Common myeloid progenitor, CD34-positive (primary cell): ENCODE measurements at regions of chr9 and their contacts with region 1.

Region 1: DNA sequence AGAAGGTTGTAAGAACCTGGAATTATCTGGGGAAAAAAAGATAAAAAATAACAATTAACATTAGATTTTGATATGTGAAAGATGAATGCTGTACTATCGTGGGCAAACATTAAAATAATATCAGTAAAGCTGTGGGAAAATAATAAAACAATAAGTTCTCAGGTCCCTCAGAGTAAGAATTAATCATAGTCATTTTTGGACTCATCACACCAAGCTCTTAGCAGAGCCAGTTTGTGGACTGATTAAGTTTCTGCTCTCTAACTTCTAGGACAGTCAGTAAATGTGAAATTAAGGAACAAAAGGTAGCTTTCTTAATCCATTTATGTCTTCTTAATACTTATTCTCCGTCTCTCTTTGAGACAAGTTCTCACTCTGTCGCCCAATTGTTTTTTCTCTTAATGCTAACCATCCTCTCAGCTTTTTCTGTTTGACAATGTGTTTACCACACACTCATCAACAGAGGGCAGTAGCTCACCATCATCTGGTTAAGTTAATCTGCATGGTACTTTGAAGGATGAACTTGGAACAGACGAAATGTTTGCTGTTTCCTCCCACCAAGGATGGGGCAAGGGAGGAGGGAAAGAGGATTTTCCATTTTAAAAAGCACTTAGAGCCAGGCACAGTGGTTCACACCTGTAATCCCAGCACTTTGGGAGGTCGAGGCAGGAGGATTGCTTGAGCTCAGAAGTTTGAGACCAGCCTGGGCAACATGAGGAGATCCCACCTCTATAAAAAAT is 5.3 kb upstream of the ACO1 start:
- DNase-seq: peak; percentile 77 to 89 (median 85)
- H3K4me3 ChIP-seq: no peak overlapping the region
- H3K27ac ChIP-seq: no peak overlapping the region
- H3K4me1 ChIP-seq: peaks cover 3 to 13% (median 8%) of the 10 kb centered on the region in 4 experiments
- H3K27me3 ChIP-seq: peaks cover 8 to 14% (median 9%) of the 10 kb centered on the region in 5 experiments

Region 2: DNA sequence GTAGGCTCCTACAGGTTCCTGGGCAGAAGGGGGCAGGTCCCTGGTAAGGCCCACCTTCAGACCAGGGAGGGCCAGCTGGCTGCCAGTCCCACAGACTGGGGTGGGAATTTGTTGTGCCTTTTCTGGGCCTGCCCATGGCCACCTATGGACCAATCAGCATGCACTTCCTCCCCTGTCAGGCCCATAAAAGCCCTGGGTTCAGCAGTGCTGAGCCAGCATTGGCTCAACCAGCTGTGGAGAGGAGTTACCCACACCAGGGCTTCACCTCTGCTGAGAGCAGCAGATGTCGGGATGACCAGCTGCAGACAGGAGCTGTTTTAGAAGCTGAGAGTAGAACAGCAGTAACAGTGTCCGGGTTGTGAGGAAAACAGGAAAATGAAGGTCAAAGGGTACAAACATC is 368.1 kb before region 1 on chr9:
- CTCF ChIA-PET with region 1: no interaction called
- POLR2A ChIA-PET with region 1: no interaction called
- DNase-seq: no peak
- H3K4me3 ChIP-seq: no peak overlapping the region
- H3K27ac ChIP-seq: no peak overlapping the region
- H3K4me1 ChIP-seq: no peaks in the 10 kb centered on the region
- H3K27me3 ChIP-seq: no peaks in the 10 kb centered on the region

Region 3: DNA sequence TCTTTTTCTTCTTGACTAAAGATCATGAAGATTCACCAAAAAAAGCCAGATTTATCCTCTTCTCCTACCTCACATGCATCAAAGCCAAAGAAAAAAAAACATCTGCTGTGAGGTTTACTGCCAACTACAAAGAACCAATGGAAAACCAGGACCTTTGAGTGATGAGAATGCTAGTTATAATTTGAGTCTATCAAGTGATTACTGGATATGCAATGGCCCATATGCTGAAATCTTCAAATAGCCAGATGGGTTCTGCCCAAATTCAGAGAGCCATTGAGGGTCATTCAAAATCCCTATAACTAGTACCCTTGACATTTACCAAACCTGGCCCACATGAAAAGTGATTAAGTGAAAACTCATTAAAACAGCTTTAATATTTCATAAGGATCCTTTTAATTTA is 73.2 kb before region 1 on chr9:
- CTCF ChIA-PET with region 1: no interaction called
- POLR2A ChIA-PET with region 1: no interaction called
- DNase-seq: no peak
- H3K4me3 ChIP-seq: no peak overlapping the region
- H3K27ac ChIP-seq: no peak overlapping the region
- H3K4me1 ChIP-seq: no peaks in the 10 kb centered on the region
- H3K27me3 ChIP-seq: peaks cover 0 to 2% (median 0%) of the 10 kb centered on the region in 5 experiments

Region 4: GRCh38 chr9:32360983-32361673 is 18.0 kb before region 1 on chr9:
- CTCF ChIA-PET with region 1: no interaction called
- POLR2A ChIA-PET with region 1: no interaction called
- DNase-seq: no peak
- H3K4me3 ChIP-seq: no peak overlapping the region
- H3K27ac ChIP-seq: no peak overlapping the region
- H3K4me1 ChIP-seq: no peaks in the 10 kb centered on the region
- H3K27me3 ChIP-seq: peaks cover 0 to 5% (median 2%) of the 10 kb centered on the region in 5 experiments

Region 5: DNA sequence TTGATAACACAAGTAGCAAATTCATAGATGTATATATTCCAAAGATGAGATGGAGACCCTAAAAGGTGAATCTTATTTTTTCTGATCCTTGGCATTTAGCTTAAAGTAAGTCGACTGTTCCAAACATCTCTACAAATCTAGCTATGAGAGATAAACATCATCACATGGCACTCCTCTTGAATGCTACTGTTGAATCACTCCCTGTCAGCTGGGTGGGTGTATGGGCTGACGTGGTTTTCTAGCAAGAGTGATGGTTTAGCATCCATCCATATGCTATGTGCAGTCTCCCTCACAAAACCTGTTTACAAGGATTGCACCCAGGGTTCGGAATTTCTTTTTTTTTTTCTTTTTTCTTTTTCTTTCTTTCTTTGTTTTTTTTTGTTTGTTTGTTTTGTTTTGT is 19.0 kb after region 1 on chr9:
- CTCF ChIA-PET with region 1: interaction called, 10 read pairs
- POLR2A ChIA-PET with region 1: no interaction called
- DNase-seq: no peak
- H3K4me3 ChIP-seq: no peak overlapping the region
- H3K27ac ChIP-seq: no peak overlapping the region
- H3K4me1 ChIP-seq: no peaks in the 10 kb centered on the region
- H3K27me3 ChIP-seq: no peaks in the 10 kb centered on the region

Region 6: GRCh38 chr9:32431940-32432555 is 52.9 kb after region 1 on chr9:
- CTCF ChIA-PET with region 1: interaction called, 153 read pairs
- POLR2A ChIA-PET with region 1: no interaction called
- DNase-seq: peak; percentile 47 to 68 (median 59)
- H3K4me3 ChIP-seq: no peak overlapping the region
- H3K27ac ChIP-seq: no peak overlapping the region
- H3K4me1 ChIP-seq: peaks cover 0 to 2% (median 0%) of the 10 kb centered on the region in 4 experiments
- H3K27me3 ChIP-seq: no peaks in the 10 kb centered on the region

Region 7: DNA sequence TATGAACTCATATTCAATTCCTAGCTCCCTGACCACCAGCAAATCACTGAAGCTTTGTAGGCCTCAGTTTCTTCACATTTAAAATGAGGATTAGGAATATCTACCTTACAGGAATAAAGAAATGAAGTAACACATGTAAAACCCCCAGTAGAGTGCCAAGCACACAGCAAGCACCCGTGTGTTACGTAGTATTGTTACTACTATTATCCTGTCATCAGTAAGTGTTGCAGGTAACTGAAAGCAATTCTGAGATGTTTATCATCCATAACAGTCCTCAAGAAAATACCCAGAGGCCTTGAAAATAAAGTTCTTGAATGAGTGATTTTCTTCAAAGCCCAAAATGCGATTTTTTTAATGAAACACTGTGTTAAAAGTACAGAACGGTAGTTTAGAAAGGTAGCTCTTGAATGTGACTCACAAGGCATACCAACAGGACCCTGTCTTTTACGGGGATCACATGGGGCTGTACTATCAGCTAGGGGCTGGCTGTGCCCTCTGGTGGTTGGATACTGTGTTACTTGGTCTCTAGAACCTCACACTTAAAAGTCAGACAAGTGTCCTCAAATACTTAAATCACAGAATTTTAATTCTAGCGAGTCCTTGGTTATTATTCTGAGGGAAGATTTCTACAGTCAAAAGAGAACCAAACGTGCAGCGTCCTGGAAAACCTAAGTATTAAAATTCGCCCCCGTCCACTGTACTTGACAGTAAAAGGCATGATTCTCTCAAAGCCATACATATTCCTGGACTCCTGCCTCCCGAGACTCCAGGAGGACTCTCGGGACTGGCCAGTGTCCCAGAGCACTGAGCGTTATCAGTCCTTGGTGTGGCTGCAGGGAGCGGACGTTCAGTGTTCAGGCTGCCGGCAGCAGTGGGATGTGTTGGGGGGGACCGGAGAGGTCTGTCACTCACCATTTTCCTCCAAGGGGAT is 193.1 kb after region 1 on chr9:
- CTCF ChIA-PET with region 1: interaction called, 257 read pairs
- POLR2A ChIA-PET with region 1: interaction called, 3 read pairs
- DNase-seq: peak; percentile 90 to 96 (median 95)
- H3K4me3 ChIP-seq: peak overlapping the region; percentile 88 to 100 (median 100)
- H3K27ac ChIP-seq: peak overlapping the region; percentile 81 to 89
- H3K4me1 ChIP-seq: peaks cover 13 to 34% (median 17%) of the 10 kb centered on the region in 4 experiments
- H3K27me3 ChIP-seq: no peaks in the 10 kb centered on the region

Region 8: DNA sequence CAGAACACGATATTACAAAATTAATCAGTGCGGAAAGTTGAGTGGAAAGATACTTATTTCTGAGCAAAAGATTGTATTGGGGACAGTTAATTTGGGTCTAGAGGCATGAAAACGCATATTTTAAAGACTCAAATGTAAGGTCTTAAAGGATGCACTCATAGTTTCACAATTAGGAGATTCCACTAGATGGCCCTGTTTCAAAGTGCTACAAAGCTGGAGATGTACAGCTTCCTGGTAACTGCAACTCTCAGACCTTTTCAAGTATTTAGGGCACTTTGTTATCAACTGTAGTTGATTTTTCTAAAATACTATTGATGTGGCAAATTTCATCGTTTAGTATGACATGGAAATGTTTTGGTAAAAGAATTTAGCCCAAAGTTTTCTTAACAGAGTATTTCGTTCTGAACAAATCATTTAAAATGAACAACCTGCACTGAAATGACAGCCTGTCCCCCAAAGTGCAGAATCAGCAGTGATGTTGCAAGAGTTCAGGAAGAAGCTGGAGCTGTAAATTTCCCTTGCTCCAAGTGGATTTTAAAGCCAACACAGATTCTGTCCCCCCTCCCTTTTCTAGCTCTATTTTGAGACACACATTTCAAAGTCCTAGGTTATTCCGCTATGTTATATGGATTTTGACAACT is 210.0 kb after region 1 on chr9:
- CTCF ChIA-PET with region 1: interaction called, 257 read pairs
- POLR2A ChIA-PET with region 1: no interaction called
- DNase-seq: peak; percentile 30 to 66 (median 63)
- H3K4me3 ChIP-seq: no peak overlapping the region
- H3K27ac ChIP-seq: no peak overlapping the region
- H3K4me1 ChIP-seq: no peaks in the 10 kb centered on the region
- H3K27me3 ChIP-seq: peaks cover 0 to 26% (median 5%) of the 10 kb centered on the region in 5 experiments

Region 9: GRCh38 chr9:32877639-32878217 is 498.6 kb after region 1 on chr9:
- CTCF ChIA-PET with region 1: no interaction called
- POLR2A ChIA-PET with region 1: no interaction called
- DNase-seq: no peak
- H3K4me3 ChIP-seq: no peak overlapping the region
- H3K27ac ChIP-seq: no peak overlapping the region
- H3K4me1 ChIP-seq: no peaks in the 10 kb centered on the region
- H3K27me3 ChIP-seq: peaks cover 1 to 86% (median 33%) of the 10 kb centered on the region in 5 experiments